MCF 10A (cell line): ENCODE measurements at regions of chr6 and their contacts with region 1.

Region 1: DNA sequence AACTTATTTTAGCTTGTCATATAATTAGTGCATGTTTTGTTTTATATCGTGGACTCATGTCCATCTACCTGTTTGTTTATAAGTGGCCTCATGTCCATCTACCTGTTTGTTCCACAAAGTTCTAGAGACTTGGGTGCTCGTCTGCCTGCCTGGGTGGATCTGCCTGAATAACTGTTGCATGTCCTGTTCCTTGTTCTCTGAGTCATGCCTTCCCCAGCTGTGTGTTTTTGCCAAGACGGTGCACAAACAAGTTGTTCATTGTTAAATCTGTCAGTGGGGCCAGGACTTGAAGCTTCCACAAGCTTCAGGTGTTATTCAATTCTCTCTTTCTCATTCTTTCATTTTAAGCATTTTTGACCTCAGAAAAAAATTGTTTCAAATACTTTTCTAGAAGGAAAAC is 358.0 kb upstream of the CITED2 start:
- DNase-seq: peak; percentile 79
- H3K4me3 Mint-ChIP-seq: peak overlapping the region; percentile 15
- H3K27ac Mint-ChIP-seq: peak overlapping the region; percentile 84
- H3K4me1 Mint-ChIP-seq: peaks cover 16% of the 10 kb centered on the region
- H3K27me3 Mint-ChIP-seq: no peaks in the 10 kb centered on the region
- CTCF ChIP-seq: no peak

Region 2: GRCh38 chr6:139764498-139764986 is 32.1 kb after region 1 on chr6:
- CTCF ChIA-PET with region 1: no interaction called
- POLR2A ChIA-PET with region 1: interaction called, 11 read pairs
- intact Hi-C with region 1: no loop called
- DNase-seq: peak; percentile 86
- H3K4me3 Mint-ChIP-seq: peak overlapping the region; percentile 14
- H3K27ac Mint-ChIP-seq: peak overlapping the region; percentile 88
- H3K4me1 Mint-ChIP-seq: peaks cover 37% of the 10 kb centered on the region
- H3K27me3 Mint-ChIP-seq: no peaks in the 10 kb centered on the region
- CTCF ChIP-seq: no peak

Region 3: GRCh38 chr6:140001821-140002341 is 269.4 kb after region 1 on chr6:
- CTCF ChIA-PET with region 1: no interaction called
- POLR2A ChIA-PET with region 1: no interaction called
- intact Hi-C with region 1: no loop called
- DNase-seq: no peak
- H3K4me3 Mint-ChIP-seq: no peak overlapping the region
- H3K27ac Mint-ChIP-seq: peak overlapping the region; percentile 67
- H3K4me1 Mint-ChIP-seq: no peaks in the 10 kb centered on the region
- H3K27me3 Mint-ChIP-seq: no peaks in the 10 kb centered on the region
- CTCF ChIP-seq: no peak